Heart right ventricle (tissue), 16 donors: ENCODE measurements at regions of chr6 and their contacts with region 1.

Region 1: DNA sequence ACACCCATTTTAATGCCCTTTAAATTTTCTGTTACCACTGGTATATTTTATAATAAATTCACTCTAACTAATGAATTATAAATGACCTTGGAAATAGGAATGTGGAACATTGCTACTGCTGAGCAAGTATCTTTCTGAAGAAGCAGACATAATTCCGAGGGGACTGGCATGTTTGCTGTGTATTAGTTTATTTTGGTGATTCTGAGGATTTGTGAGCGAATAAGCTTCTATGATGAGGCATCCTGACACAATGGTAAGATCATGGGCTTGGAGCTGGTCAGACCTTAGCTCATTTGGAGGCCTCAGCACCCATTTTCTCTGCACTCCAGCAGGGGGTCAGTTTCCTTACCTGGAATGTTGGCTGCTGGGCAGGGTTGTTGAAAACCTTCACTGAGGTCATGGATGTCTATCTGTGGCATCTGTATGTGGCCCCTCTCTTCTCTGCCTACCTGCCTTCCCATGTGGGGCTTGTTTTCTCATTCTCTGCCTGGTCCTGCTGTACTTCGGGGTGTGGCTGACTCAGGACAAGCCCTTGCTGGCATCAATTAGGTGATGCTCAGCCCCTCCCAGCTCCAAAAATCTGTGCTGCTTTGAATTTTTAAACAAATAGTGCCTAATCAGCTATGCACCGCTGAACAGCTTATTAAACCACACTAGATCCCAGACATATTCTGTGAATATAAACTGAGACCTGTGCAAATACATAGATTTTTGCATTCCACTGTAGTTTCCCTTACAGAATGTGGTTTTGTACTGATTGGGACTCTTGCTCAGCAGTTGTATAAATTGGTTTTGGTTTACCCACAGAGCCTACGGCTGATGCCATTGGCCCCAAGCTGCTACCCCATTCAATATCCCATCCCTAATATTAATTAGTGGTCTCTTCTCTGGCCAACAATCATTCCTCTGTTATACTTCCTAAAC is 10.7 kb downstream of the ARID1B start:
- DNase-seq: no peak
- ATAC-seq: no peak
- H3K4me3 ChIP-seq: no peak overlapping the region
- H3K27ac ChIP-seq: peak overlapping the region in 5 of 10 donors; percentile 10 to 39 (median 24)
- H3K4me1 ChIP-seq: peaks cover 9 to 100% (median 87%) of the 10 kb centered on the region in 9 donors
- H3K27me3 ChIP-seq: no peaks in the 10 kb centered on the region
- CTCF ChIP-seq: no peak

Region 2: GRCh38 chr6:156848533-156848932 is 60.7 kb after region 1 on chr6:
- intact Hi-C with region 1: loop called in 5 of 10 experiments (anchors 5 kb)
- DNase-seq: peak; percentile 81 to 89
- ATAC-seq: peak; percentile 82 to 91 (median 85)
- H3K4me3 ChIP-seq: peak overlapping the region in 5 of 10 donors; percentile 5 to 20 (median 9)
- H3K27ac ChIP-seq: peak overlapping the region in 9 of 10 donors; percentile 2 to 78 (median 66)
- H3K4me1 ChIP-seq: peaks cover 35 to 100% (median 99%) of the 10 kb centered on the region in 9 donors
- H3K27me3 ChIP-seq: no peaks in the 10 kb centered on the region
- CTCF ChIP-seq: no peak